CD8-positive, alpha-beta T cell (primary cell): ENCODE measurements at regions of chr3 and their contacts with region 1.

Region 1: GRCh38 chr3:32684800-32685542 is at the start of gene CNOT10:
- DNase-seq: peak; percentile 91 to 98 (median 96)
- ATAC-seq: peak; percentile 90
- H3K4me3 ChIP-seq: peak within 1 kb of the TSS; percentile 60 to 82
- H3K4me3 Mint-ChIP-seq: peak within 1 kb of the TSS; percentile 91
- H3K27ac ChIP-seq: peak within 1 kb of the TSS; percentile 84 to 88
- H3K27ac Mint-ChIP-seq: peak within 1 kb of the TSS; percentile 97
- H3K4me1 ChIP-seq: peaks cover 24% of the 10 kb centered on the region
- H3K4me1 Mint-ChIP-seq: peaks cover 37% of the 10 kb centered on the region
- H3K27me3 ChIP-seq: no peaks in the 10 kb centered on the region
- H3K27me3 Mint-ChIP-seq: no peaks in the 10 kb centered on the region
- CTCF ChIP-seq: peak; percentile 27
- total RNA-seq, gene CNOT10: 28.0 to 31.1 TPM

Region 2: DNA sequence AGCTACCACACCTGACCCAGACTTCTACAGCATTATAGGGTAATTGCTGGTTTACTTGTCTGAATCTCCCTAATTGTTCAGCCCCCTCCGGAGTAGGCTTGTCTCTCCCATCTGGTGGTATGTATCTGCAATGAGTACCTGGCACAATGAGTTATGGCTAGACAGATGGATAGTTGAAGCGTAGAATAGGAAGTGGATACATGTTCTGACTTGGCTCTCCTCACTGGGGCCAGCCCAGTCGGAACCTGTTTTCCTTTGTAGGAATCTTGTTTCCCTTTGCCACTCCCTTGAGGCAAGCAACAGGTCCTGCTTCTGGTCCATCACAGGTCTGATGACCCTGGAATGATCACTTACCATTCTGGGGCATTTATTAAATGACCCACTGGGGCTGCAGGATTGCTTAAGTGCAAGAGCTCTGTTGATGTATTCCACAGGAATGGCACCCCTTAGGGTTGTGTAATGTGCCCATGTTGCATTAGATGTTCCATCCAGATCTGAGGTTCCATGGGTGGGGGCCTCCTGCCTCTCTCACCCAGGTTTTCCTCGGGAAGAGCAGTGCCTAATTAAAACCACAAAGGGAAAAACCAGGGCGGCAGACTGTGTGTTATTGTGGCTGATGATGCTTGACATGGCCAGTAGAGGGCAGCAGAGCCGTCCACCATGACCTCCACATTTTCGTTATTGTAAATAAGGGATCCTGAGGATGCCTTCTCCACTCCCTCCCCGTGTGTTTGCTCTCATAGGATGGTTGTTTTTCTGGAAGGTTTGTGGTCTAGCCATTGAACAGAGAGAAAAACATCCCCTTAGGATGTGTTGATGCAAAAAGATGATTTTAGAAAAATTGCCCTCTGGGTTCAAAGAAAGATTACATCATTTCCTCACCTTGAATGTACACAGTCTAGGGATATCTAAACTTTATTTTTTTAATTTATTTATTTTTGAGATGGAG is 388.4 kb before region 1 on chr3:
- CTCF ChIA-PET with region 1: no interaction called
- POLR2A ChIA-PET with region 1: no interaction called
- intact Hi-C with region 1: loop called in 1 of 2 experiments (anchors 10 kb)
- DNase-seq: peak; percentile 16 to 79 (median 62)
- ATAC-seq: peak; percentile 76
- H3K4me3 ChIP-seq: no peak overlapping the region
- H3K4me3 Mint-ChIP-seq: peak overlapping the region; percentile 61
- H3K27ac ChIP-seq: no peak overlapping the region
- H3K27ac Mint-ChIP-seq: peak overlapping the region; percentile 85
- H3K4me1 ChIP-seq: peaks cover 7% of the 10 kb centered on the region
- H3K4me1 Mint-ChIP-seq: peaks cover 15% of the 10 kb centered on the region
- H3K27me3 ChIP-seq: no peaks in the 10 kb centered on the region
- H3K27me3 Mint-ChIP-seq: no peaks in the 10 kb centered on the region
- CTCF ChIP-seq: peak; percentile 91

Region 3: DNA sequence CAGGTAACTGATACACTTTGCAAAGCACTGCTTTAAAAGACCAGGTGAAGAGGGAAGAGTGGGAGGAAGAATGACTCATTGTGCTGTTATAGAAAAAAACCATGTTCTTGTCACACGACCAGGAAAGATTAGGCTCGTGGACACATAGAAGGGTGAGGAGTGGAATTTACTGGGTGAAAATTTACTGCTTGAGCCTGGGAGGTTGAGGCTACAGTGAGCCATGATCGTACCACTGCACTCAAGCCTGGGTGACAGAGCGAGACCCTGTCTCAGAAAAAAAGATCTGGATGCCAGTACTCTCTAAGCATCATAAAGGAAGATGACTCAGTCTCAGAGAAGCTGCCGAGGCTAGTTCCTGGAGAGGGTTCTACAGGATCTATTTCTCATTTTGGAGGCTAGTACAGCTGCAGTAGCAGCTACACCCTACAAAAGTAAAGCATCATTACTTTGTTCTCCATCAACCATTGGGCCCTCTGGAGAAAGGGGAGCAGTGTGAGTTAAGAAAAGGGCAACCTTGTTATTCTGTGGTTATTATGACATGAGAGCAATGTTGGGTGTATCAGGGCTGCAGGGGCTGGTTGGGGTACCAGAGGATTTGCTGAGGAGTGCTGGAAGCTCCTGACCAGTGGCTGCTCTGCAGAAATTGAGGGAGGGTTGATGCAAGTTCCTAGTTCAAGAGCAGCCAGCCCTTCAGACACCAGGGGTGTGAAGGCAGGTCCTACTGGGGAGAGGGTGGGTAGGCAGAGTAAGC is 371.1 kb before region 1 on chr3:
- CTCF ChIA-PET with region 1: no interaction called
- POLR2A ChIA-PET with region 1: no interaction called
- intact Hi-C with region 1: no loop called
- DNase-seq: peak in 1 of 9 experiments; percentile 30
- ATAC-seq: peak; percentile 61
- H3K4me3 ChIP-seq: no peak overlapping the region
- H3K4me3 Mint-ChIP-seq: no peak overlapping the region
- H3K27ac ChIP-seq: no peak overlapping the region
- H3K27ac Mint-ChIP-seq: peak overlapping the region; percentile 15
- H3K4me1 ChIP-seq: no peaks in the 10 kb centered on the region
- H3K4me1 Mint-ChIP-seq: peaks cover 16% of the 10 kb centered on the region
- H3K27me3 ChIP-seq: no peaks in the 10 kb centered on the region
- H3K27me3 Mint-ChIP-seq: no peaks in the 10 kb centered on the region
- CTCF ChIP-seq: no peak

Region 4: DNA sequence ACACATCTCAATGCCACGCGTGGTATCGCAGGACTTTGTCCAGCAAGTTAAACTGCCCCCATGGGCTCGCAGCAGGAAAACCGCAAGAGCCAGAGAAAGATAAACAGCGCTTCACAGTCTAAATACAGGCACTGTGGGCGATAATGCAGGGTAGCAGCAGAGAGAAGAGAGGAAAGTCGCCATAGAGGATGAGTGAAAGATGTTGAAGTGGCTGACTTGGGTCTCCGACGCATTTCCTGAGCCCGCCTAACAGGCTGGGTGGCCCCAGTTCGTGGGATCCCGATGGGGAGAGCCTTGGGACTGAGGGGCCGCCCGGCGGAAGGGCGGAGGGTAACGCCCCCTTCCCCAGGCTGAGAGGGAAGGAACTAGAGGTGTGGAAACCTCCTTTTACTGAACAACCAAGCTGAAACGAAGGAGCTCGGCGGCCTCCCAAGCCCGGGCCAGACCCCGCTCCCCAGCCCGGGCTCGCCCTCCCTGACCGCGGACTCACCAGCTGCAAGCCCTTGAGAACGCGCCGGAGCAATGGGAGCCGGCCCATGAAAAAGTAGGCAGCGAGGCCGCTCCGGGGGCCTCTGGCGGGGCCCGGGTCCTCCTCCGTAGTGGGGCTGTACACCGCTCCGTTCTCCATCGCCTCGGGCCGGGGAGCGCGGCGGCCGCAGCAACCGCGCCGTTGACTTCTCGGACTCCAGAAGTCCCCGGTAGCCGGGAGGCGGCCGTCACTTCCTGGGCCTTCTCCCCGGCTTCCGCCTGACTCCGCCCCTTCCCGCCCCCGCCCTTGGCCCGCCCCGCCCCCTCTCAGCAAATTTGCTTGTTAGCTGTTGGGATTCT is 182.6 kb before region 1 on chr3 and contains the start of gene CMTM6:
- CTCF ChIA-PET with region 1: no interaction called
- POLR2A ChIA-PET with region 1: no interaction called
- intact Hi-C with region 1: loop called (anchors 1 to 5 kb)
- DNase-seq: peak; percentile 37 to 89 (median 75)
- ATAC-seq: peak; percentile 79
- H3K4me3 ChIP-seq: peak within 1 kb of the TSS; percentile 76 to 86
- H3K4me3 Mint-ChIP-seq: peak within 1 kb of the TSS; percentile 88
- H3K27ac ChIP-seq: peak within 1 kb of the TSS; percentile 94 to 95
- H3K27ac Mint-ChIP-seq: peak within 1 kb of the TSS; percentile 91
- H3K4me1 ChIP-seq: peaks cover 18% of the 10 kb centered on the region
- H3K4me1 Mint-ChIP-seq: peaks cover 32% of the 10 kb centered on the region
- H3K27me3 ChIP-seq: no peaks in the 10 kb centered on the region
- H3K27me3 Mint-ChIP-seq: no peaks in the 10 kb centered on the region
- CTCF ChIP-seq: no peak
- total RNA-seq, gene CMTM6: 34.7 to 35.0 TPM

Region 5: DNA sequence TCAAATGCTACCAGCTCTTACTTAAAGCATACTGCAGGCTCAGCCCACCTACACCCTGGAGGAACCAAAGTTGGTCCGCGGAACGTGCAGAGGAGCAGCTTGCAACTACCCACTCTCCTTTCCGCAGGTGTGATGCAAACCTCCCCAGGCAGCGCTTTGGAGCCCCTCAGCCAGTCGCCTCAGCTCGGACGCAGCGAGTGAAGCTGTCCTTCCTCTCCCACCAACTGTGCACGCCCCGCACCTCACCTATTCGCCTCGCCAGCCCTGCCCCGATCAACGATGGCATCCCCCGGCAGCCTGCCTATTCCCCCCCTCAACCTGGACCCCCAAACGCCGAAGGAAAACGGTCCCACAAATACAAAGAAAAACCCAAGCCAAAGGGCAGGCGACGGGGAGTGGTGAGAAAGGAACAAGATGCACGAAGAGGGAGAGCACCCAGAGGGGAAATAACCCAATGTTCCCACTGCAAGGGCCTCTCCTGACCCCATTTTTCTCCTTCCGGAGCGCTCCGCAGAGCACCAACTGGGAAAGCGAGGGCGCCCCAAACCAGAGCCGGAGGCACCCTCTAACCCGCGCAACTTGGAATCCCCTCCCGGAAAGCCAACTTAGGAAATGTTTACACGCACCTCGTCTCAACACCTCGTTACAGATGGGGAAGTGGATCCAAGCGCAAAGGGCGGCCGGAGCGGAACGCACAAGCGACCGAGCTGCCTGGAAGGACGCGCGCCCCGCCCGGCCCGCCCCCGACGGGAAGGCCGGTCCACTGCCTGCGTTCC is 411.3 kb after region 1 on chr3:
- CTCF ChIA-PET with region 1: no interaction called
- POLR2A ChIA-PET with region 1: interaction called, 3 read pairs
- intact Hi-C with region 1: loop called in 1 of 2 experiments (anchors 5 kb)
- DNase-seq: peak; percentile 16 to 70 (median 42)
- ATAC-seq: peak; percentile 55
- H3K4me3 ChIP-seq: peak overlapping the region; percentile 73 to 97
- H3K4me3 Mint-ChIP-seq: peak overlapping the region; percentile 95
- H3K27ac ChIP-seq: peak overlapping the region; percentile 76
- H3K27ac Mint-ChIP-seq: peak overlapping the region; percentile 89
- H3K4me1 ChIP-seq: peaks cover 7% of the 10 kb centered on the region
- H3K4me1 Mint-ChIP-seq: peaks cover 40% of the 10 kb centered on the region
- H3K27me3 ChIP-seq: no peaks in the 10 kb centered on the region
- H3K27me3 Mint-ChIP-seq: no peaks in the 10 kb centered on the region
- CTCF ChIP-seq: no peak

Region 6: DNA sequence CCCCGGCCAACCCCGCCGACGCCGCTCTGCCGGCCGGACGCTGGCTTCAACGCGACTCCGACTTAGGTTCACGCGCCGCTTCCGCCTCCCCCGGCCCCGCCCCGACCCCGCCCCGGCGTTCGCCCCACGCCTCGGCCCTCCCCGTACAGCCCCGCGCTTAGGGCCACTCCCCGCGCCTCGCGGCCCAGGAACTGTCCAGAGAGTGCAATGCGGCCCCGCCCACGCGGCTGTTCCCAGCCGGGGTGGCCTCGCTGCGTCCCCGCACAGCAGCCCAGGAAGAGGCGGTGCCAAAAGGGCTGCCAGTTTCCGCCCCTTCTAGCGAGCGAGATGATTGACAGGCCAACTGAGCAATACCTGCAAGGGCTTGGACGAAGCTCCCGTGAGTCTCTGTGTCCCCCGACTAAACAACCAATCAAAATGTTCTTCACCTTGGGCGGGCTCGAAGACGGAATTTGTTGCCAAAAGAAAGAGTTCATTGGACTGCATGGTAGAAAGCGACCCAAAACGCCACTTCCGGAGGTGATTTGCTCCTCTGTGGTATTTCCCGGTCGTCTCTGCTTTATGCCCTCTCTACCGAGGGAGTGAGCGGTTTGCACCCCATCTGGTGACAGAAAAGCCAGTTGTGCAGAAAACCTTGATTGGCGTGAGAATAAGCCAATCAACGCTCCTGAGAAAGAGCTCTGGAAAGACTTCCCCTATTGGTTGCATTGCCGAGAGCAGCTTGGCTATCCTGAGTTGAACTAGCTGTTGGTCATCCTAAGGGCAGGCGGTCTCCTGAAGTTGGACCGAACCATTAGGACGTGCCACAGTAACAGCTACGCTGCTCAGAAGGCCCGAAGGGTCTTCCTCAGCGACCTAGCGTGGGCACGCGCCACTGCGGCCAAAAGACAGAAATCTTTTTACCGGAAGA is 755.6 kb after region 1 on chr3 and contains the start of gene UBP1:
- CTCF ChIA-PET with region 1: no interaction called
- POLR2A ChIA-PET with region 1: no interaction called
- intact Hi-C with region 1: loop called (anchors 1 to 5 kb)
- DNase-seq: peak; percentile 90 to 100 (median 95)
- ATAC-seq: peak; percentile 81
- H3K4me3 ChIP-seq: peak within 1 kb of the TSS; percentile 79 to 81
- H3K4me3 Mint-ChIP-seq: peak within 1 kb of the TSS; percentile 100
- H3K27ac ChIP-seq: peak within 1 kb of the TSS; percentile 94 to 96
- H3K27ac Mint-ChIP-seq: peak within 1 kb of the TSS; percentile 100
- H3K4me1 ChIP-seq: peaks cover 33% of the 10 kb centered on the region
- H3K4me1 Mint-ChIP-seq: peaks cover 48% of the 10 kb centered on the region
- H3K27me3 ChIP-seq: no peaks in the 10 kb centered on the region
- H3K27me3 Mint-ChIP-seq: no peaks in the 10 kb centered on the region
- CTCF ChIP-seq: no peak
- total RNA-seq, gene UBP1: 54.4 to 55.9 TPM

Region 7: DNA sequence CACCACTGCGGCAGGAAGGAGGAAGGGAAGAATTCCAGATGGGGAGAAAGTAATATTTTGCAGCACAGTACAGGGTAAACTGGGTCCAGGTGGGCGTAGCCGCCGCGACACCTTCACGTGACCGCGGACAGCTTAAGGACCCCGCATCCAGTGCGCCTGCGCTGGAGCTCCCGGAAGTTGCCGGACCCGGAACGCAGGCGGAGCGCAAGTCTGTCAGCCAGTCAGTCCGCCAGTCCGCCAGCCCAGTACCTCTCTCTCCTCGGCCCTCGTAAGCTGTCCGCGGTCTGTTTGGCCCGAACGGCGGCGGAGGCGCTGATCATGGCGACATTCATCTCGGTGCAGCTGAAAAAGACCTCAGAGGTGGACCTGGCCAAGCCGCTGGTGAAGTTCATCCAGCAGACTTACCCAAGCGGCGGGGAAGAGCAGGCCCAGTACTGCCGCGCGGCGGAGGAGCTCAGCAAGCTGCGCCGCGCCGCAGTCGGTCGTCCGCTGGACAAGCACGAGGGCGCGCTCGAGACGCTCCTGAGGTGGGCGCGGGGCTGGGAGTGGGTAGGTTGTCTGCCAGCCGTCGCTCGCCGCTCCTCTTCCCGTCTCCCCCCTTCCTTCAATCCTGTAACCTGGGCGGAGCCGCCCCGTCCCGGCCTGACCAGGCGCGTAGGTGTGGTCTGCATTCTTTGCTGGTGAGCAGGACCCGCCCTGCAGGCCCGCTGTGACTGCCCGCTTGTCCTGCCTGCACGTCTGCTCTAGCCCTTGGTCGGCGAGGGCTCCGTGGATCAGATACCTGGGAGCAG is 1113.6 kb after region 1 on chr3 and contains the start of gene PDCD6IP:
- CTCF ChIA-PET with region 1: no interaction called
- POLR2A ChIA-PET with region 1: no interaction called
- intact Hi-C with region 1: loop called in 1 of 2 experiments (anchors 10 kb)
- DNase-seq: peak; percentile 76 to 94 (median 86)
- ATAC-seq: peak; percentile 76
- H3K4me3 ChIP-seq: peak within 1 kb of the TSS; percentile 76 to 96
- H3K4me3 Mint-ChIP-seq: peak within 1 kb of the TSS; percentile 97
- H3K27ac ChIP-seq: peak within 1 kb of the TSS; percentile 74 to 90
- H3K27ac Mint-ChIP-seq: peak within 1 kb of the TSS; percentile 98
- H3K4me1 ChIP-seq: peaks cover 32% of the 10 kb centered on the region
- H3K4me1 Mint-ChIP-seq: peaks cover 53% of the 10 kb centered on the region
- H3K27me3 ChIP-seq: no peaks in the 10 kb centered on the region
- H3K27me3 Mint-ChIP-seq: no peaks in the 10 kb centered on the region
- CTCF ChIP-seq: no peak
- total RNA-seq, gene PDCD6IP: 84.7 to 92.4 TPM